ENCODE measurements at regions of chr12 and their contacts with region 1.

Region 1: DNA sequence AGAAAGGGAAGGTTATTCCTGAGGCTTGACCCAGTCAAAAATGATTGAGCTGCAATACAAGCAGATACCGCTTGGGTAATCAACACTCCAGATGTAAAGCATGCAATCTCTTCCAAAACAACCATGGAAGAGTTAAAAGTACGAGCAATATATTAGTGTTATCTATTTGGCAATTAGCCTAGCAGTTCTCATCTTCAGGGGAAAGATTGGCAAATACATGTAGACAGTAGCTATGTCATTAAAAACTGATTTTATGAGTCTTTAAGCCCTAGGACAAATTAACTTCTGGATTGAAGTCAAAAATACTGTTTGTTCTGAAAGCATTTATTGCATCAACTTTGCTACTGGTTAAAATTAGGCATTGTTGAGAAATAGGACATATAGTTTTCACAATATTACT is 9.3 kb upstream of the GYS2 start:
- DNase-seq: peak in 2 of 4 donors; percentile 21 to 25
- ATAC-seq: no peak
- H3K4me3 ChIP-seq: no peak overlapping the region
- H3K27ac ChIP-seq: no peak overlapping the region
- H3K4me1 ChIP-seq: peaks cover 0 to 21% of the 10 kb centered on the region in 2 donors
- H3K27me3 ChIP-seq: no peaks in the 10 kb centered on the region
- CTCF ChIP-seq: no peak

Region 2: GRCh38 chr12:21551841-21552465 is 62.0 kb before region 1 on chr12:
- intact Hi-C with region 1: no loop called
- DNase-seq: peak in 2 of 4 donors; percentile 75 to 83
- ATAC-seq: peak; percentile 30
- H3K4me3 ChIP-seq: no peak overlapping the region
- H3K27ac ChIP-seq: no peak overlapping the region
- H3K4me1 ChIP-seq: no peaks in the 10 kb centered on the region
- H3K27me3 ChIP-seq: no peaks in the 10 kb centered on the region
- CTCF ChIP-seq: no peak

Region 3: DNA sequence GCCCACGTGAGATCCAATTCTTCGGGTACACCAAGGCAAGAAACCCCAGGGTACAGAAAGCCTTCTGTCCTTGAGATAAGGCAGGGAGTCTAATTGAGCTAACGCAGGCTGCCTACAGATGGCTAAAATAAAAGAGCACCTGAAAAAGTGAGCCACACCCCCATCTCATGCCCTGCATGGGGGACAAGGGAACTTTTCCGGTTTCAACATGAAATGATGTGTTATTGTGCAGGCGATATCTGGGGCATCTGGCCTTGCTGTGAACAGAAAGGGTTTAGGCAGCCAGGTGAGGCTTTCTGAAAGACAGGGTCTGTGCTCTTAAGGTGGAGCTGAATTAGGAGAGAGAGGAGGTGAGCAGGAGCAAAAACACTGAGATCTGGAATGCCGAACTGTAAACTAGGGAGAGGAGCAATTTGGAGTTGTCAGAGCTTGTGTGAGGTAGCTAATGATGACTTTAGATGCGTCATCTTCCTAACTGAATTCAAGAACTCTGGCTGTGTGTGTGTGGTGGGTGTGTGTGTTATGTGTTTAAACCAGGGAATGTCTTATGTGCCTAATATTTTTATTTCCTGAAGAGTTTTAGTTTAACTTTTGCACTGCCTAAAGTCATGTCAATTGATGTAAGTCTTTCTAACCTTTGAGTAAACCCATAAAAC is 63.8 kb after region 1 on chr12:
- intact Hi-C with region 1: loop called in 1 of 2 experiments (anchors 10 kb)
- DNase-seq: no peak
- ATAC-seq: no peak
- H3K4me3 ChIP-seq: no peak overlapping the region
- H3K27ac ChIP-seq: no peak overlapping the region
- H3K4me1 ChIP-seq: peaks cover 0 to 9% of the 10 kb centered on the region in 2 donors
- H3K27me3 ChIP-seq: no peaks in the 10 kb centered on the region
- CTCF ChIP-seq: no peak

Region 4: DNA sequence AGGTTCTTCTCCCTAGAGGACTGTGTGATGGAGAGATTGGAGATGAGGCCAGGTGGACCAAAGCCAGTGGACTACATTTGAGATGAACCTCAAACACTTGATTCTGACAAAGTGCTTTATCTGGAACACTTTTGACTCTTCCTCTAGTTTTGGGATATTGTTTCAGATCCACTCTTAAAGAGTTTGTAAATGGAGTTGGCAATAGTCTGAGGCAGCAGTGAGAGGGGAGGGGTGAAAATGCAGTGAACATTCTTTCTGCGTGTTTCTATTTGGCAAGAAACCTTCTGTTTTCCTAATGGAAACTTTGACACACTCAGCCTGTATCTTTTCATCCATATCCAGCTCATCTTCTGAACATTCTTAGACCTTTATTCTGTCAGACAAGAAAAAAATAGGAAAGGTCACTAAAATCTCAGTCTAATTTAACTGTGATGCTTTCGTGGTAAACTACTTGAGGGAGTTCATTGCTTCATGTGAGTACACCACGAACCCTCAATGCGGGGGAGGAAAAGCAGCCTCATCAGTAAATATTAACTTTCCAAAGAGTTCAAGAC is 217.9 kb after region 1 on chr12:
- intact Hi-C with region 1: no loop called
- DNase-seq: peak in 2 of 4 donors; percentile 51 to 56
- ATAC-seq: peak; percentile 29
- H3K4me3 ChIP-seq: no peak overlapping the region
- H3K27ac ChIP-seq: peak overlapping the region in 1 of 2 donors; percentile 63
- H3K4me1 ChIP-seq: peaks cover 9 to 11% of the 10 kb centered on the region in 2 donors
- H3K27me3 ChIP-seq: no peaks in the 10 kb centered on the region
- CTCF ChIP-seq: no peak

Measured in left lung (tissue), 14 donors.